ENCODE measurements at regions of chr5 and their contacts with region 1.

Region 1: DNA sequence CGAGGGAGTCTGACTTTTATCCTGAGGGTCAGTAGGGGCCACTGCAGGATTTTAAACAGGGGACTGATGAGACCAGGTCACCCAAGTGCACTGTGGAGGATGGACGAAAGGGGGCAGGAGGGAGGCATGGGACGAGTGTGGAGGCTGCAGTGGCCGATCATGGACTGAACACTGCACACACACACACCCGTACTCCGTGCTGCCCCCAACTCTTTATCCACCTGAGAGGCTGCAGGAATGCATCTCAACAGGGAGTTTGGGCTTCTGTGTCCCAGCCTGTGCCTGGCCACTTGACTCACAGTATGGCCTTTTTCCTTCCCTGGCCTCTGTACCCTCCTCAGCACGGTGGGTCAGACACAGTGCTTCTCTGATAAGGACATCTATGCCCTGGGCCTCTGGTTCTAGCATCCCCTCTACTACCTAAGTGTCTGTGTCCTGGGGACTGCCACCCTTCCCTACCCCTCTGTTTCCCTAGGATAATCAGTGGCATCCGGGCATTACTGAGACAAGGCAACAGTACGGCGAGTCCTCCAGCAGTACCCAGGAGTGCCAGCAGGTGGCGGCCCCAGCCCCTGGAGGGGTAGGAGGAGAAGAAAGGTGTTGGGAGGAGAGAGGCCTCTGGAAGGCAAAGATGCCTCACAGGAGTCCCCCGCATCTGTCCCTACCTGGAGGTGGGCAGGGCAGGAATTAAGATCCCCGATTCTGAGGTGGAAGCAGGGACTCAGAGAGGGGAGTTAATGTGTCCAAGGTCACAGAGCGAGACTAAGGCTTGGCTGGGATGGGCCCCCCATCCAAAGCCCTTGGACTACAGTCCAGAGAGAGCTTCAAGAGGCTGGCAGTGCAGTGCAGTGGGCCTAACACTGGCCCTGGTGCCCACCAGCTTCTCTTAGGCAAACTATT is 5.1 kb upstream of the CDX1 start:
- DNase-seq: peak; percentile 90

Region 2: GRCh38 chr5:150172145-150172544 is 10.7 kb after region 1 on chr5:
- CTCF ChIA-PET with region 1: interaction called, 13 read pairs
- POLR2A ChIA-PET with region 1: interaction called, 5 read pairs
- DNase-seq: no peak

Region 3: DNA sequence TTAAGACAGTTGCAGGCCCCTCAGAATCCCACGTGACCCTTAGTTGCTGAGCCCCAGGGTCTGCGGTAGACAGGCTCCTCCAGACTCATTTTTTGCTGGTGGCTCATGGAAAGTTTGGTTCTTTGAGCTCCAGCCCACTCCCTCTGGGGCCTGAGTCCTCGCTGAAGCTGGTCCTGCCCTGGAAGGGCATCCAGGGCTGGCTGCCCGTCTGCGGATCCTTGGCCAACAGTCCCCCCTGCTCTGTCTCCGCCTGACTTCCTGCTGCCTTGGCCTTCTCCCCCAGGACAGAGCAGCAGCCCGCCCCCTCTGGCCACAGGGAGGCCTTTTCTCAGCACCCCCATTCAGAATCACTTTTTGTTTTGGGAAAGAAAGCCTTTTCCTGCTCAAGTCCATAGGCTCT is 52.8 kb after region 1 on chr5:
- CTCF ChIA-PET with region 1: interaction called, 11 read pairs
- POLR2A ChIA-PET with region 1: no interaction called
- DNase-seq: no peak

Measured in HEK293T (cell line).